Activated T-helper 2 cell treated with anti-CD3 and anti-CD28 coated beads, Interferon-gamma antibody, Interleukin-2, Interleukin-4, amounts not matched to agents 10 μg/mL and 5 μg/mL and 100 μg/mL, durations not matched to agents 14 hours and 24 hours and 36 hours (primary cell): ENCODE measurements at regions of chr11 and their contacts with region 1.

Region 1: DNA sequence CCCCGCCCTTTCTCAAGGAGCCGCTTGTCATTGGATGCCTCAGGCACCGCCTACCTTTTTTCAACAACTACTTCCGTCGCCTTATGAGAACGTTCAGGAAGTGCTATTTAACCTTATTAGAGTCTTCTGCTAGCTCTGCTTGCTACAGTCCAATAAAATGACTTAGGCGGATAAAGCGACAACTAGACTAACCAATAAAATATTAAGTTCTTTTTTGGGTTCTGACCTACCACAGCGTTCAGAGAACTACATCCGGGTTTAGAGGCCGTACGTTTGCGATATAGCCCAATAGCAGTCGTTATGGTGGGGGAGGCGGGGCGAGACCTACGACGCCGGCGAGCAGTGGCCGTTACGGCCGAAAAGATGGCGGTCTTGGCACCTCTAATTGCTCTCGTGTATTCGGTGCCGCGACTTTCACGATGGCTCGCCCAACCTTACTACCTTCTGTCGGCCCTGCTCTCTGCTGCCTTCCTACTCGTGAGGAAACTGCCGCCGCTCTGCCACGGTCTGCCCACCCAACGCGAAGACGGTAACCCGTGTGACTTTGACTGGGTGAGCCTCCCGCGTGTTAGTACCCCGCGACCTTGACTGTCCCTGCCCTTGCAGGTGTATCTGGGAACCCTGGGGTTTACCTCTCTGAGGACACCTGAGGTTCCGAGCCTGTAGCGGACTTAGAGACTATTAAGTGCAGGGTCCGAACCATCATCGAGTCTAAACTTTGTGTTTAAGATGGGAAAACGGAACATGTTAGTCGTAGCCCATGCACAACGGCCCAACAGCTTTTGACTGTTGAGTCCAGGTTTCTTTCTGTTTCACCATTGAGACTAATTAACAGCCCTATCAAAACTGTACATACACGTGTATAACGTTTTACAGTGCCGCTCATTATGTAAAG is at the start of gene TMX2:
- DNase-seq: peak; percentile 90
- H3K4me3 Mint-ChIP-seq: peak within 1 kb of the TSS; percentile 99
- H3K27ac Mint-ChIP-seq: peak within 1 kb of the TSS; percentile 94
- H3K4me1 Mint-ChIP-seq: peaks cover 35% of the 10 kb centered on the region
- H3K27me3 Mint-ChIP-seq: no peaks in the 10 kb centered on the region
- total RNA-seq, gene TMX2: 74.6 and 80.0 TPM in 2 replicates

Region 2: GRCh38 chr11:57324886-57325734 is 387.4 kb before region 1 on chr11 and contains the start of gene TNKS1BP1:
- intact Hi-C with region 1: loop called (anchors 1 kb)
- DNase-seq: peak; percentile 86
- H3K4me3 Mint-ChIP-seq: peak within 1 kb of the TSS; percentile 84
- H3K27ac Mint-ChIP-seq: peak within 1 kb of the TSS; percentile 92
- H3K4me1 Mint-ChIP-seq: peaks cover 51% of the 10 kb centered on the region
- H3K27me3 Mint-ChIP-seq: no peaks in the 10 kb centered on the region
- total RNA-seq, gene TNKS1BP1: 15.6 and 16.5 TPM in 2 replicates

Region 3: GRCh38 chr11:57657194-57658022 is 55.1 kb before region 1 on chr11 and contains the start of gene CLP1:
- intact Hi-C with region 1: loop called (anchors 1 kb)
- DNase-seq: peak; percentile 99
- H3K4me3 Mint-ChIP-seq: peak within 1 kb of the TSS; percentile 99
- H3K27ac Mint-ChIP-seq: peak within 1 kb of the TSS; percentile 94
- H3K4me1 Mint-ChIP-seq: peaks cover 26% of the 10 kb centered on the region
- H3K27me3 Mint-ChIP-seq: no peaks in the 10 kb centered on the region
- total RNA-seq, gene CLP1: 17.7 and 19.9 TPM in 2 replicates

Region 4: DNA sequence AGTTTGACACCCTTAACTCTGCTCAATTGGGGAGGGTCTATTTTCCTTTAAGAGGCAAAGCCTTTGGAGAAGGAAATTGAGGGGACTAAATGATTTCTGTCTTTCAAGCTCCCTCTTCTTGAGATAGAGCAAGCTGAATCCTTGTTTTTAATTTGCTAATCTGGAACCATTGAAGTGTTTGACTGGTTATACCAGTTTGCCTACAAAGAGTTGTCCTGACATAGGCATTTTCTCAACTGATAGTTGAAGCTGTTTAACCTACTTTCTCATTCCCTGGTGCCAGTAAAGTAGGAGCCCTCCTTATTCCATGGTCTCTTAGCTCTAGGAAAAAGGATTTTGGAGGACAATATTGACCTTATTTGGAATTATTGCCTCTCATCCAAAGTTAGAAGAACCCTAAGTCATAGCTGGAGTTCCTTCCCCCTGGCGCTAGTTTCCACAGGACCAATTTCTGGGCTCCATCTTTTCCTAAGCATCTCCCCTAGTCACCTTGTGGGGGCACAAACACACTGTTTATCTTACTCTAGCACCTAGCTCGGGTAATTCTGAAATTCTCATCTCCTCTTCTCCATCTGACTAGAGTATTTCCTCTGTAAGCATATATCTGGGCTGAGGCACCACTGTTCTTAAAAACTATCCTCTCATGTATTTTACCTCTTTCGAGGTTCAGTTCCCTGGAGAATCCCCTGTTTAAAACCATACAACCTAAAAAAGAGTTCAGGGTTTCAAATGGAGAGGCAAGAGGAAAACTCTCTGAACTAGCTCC is 37.1 kb before region 1 on chr11:
- intact Hi-C with region 1: no loop called
- DNase-seq: no peak
- H3K4me3 Mint-ChIP-seq: no peak overlapping the region
- H3K27ac Mint-ChIP-seq: peak overlapping the region; percentile 3
- H3K4me1 Mint-ChIP-seq: peaks cover 43% of the 10 kb centered on the region
- H3K27me3 Mint-ChIP-seq: no peaks in the 10 kb centered on the region

Region 5: GRCh38 chr11:57792060-57792541 is 79.6 kb after region 1 on chr11:
- intact Hi-C with region 1: loop called (anchors 1 kb)
- DNase-seq: peak; percentile 85
- H3K4me3 Mint-ChIP-seq: peak overlapping the region; percentile 45
- H3K27ac Mint-ChIP-seq: peak overlapping the region; percentile 68
- H3K4me1 Mint-ChIP-seq: peaks cover 40% of the 10 kb centered on the region
- H3K27me3 Mint-ChIP-seq: no peaks in the 10 kb centered on the region

Region 6: DNA sequence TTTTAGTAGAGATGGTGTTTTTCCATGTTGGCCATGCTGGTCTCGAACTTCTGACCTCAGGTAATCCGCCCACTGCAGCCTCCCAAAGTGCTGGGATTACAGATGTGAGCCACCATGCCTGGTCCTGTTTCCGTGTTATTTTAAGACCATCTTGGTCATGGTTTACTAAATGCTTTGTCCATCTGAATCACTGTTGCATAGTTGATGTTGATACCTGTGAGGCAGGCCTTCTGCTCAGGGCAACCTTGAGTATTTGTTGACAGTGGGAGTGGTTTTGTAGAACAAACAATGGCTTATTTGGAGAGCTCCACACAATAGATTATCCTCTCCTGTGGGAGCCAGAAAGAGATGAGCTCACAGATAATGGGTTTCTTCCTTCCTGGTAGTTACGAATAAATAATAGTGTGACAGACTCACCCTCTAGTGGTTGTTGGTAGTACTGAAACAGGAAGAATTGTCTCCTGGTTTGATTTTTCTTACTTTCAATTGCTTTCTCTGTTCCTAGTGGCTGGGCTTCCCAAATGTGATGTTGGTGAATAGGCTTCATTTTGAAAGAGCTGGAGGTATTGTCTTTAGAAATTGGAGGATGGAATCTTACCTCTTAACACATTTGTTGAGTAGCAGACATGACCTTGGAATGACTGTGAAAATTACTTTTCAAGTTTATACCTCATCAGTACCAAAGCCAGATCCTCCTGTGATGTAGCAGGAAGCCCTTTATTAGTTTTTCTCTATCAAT is 88.1 kb after region 1 on chr11:
- intact Hi-C with region 1: loop called (anchors 2 kb)
- DNase-seq: no peak
- H3K4me3 Mint-ChIP-seq: no peak overlapping the region
- H3K27ac Mint-ChIP-seq: peak overlapping the region; percentile 53
- H3K4me1 Mint-ChIP-seq: peaks cover 29% of the 10 kb centered on the region
- H3K27me3 Mint-ChIP-seq: no peaks in the 10 kb centered on the region

Region 7: GRCh38 chr11:59550368-59550841 is 1837.9 kb after region 1 on chr11:
- intact Hi-C with region 1: loop called (anchors 10 kb)
- DNase-seq: peak; percentile 84
- H3K4me3 Mint-ChIP-seq: peak overlapping the region; percentile 89
- H3K27ac Mint-ChIP-seq: peak overlapping the region; percentile 94
- H3K4me1 Mint-ChIP-seq: peaks cover 24% of the 10 kb centered on the region
- H3K27me3 Mint-ChIP-seq: peaks cover 4% of the 10 kb centered on the region